CD4-positive, alpha-beta T cell (primary cell): ENCODE measurements at regions of chr1 and their contacts with region 1.

Region 1: GRCh38 chr1:54297596-54298283 is 97.8 kb downstream of the MRPL37 start:
- DNase-seq: no peak
- ATAC-seq: no peak
- H3K4me3 ChIP-seq: no peak overlapping the region
- H3K4me3 Mint-ChIP-seq: no peak overlapping the region
- H3K27ac ChIP-seq: no peak overlapping the region
- H3K27ac Mint-ChIP-seq: peak overlapping the region; percentile 38
- H3K4me1 ChIP-seq: peaks cover 59% of the 10 kb centered on the region
- H3K4me1 Mint-ChIP-seq: peaks cover 96% of the 10 kb centered on the region
- H3K27me3 ChIP-seq: no peaks in the 10 kb centered on the region
- H3K27me3 Mint-ChIP-seq: no peaks in the 10 kb centered on the region
- CTCF ChIP-seq: no peak

Region 2: GRCh38 chr1:54335755-54336108 is 38.0 kb after region 1 on chr1:
- CTCF ChIA-PET with region 1: no interaction called
- POLR2A ChIA-PET with region 1: no interaction called
- intact Hi-C with region 1: loop called in 1 of 2 experiments (anchors 5 kb)
- DNase-seq: no peak
- ATAC-seq: no peak
- H3K4me3 ChIP-seq: no peak overlapping the region
- H3K4me3 Mint-ChIP-seq: no peak overlapping the region
- H3K27ac ChIP-seq: no peak overlapping the region
- H3K27ac Mint-ChIP-seq: no peak overlapping the region
- H3K4me1 ChIP-seq: peaks cover 49% of the 10 kb centered on the region
- H3K4me1 Mint-ChIP-seq: peaks cover 70% of the 10 kb centered on the region
- H3K27me3 ChIP-seq: no peaks in the 10 kb centered on the region
- H3K27me3 Mint-ChIP-seq: no peaks in the 10 kb centered on the region
- CTCF ChIP-seq: no peak